Thyroid gland (tissue), 4 donors: ENCODE measurements at regions of chr3 and their contacts with region 1.

Region 1: DNA sequence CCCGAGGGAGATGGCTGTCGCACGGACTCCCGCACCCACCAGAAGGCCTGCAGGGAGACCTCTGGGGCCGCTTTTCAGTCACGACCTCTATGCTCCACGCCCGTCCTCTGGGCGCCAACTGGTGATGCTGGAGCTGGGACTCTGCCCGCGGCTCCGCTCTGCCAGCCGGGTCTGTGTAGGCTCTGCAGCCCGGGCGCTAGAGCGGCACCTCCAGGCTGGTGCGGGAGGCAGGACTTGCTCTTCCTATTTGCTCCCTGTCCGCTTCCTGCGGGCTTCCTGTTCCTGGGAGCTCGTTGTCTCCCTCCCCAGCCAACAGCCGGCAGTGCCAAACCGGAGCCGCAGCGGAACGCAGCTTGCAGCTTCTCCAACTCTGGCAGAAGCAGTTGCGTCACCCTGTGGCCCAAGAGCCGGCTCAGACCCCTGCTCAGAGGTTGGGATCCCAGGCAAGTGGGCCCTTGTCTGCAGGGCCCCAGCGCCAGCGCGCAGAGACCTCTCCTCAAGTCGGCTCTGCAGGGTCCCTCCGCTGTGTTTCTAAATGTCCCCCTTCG is 285.9 kb downstream of the XXYLT1 start:
- DNase-seq: peak; percentile 75 to 83
- H3K4me3 ChIP-seq: peak overlapping the region in 1 of 3 donors; percentile 15
- H3K27ac ChIP-seq: no peak overlapping the region
- H3K4me1 ChIP-seq: peaks cover 0 to 12% of the 10 kb centered on the region in 2 donors
- H3K27me3 ChIP-seq: no peaks in the 10 kb centered on the region
- CTCF ChIP-seq: peak in 4 of 6 experiments; percentile 14 to 54 (median 38)
- POLR2A ChIP-seq: no peak

Region 2: DNA sequence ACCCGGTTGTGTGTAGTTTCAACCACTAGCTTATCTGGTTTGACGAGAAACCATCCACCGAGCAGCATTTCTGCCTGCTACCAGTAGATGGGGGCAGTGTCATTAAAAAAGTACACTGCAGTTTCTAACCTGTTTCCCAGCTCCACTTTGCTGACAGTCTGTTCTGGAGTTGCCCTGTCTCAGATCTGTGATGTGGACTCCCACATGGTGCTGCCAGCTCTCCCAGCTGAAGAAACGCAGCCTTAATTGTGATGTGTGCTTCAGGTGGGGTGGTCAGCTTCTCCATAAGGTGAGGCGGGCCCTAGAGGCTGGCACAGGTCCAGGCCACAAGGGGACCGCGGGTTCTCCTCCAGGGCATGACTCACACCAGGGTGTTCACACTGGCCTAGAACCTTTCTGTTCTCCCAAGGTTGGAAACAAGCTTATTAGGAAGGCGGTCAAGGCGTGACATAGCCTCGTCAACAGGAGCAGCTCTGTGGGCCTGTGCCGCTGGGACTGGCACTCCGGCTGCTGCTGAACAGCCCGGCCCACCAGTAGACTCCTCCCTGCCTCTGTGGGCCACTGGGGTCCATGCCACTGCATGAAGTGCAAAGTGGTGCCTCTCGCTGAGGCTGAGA is 302.3 kb before region 1 on chr3:
- intact Hi-C with region 1: loop called (anchors 10 kb)
- DNase-seq: peak; percentile 81 to 84
- H3K4me3 ChIP-seq: no peak overlapping the region
- H3K27ac ChIP-seq: no peak overlapping the region
- H3K4me1 ChIP-seq: peaks cover 14 to 26% of the 10 kb centered on the region in 2 donors
- H3K27me3 ChIP-seq: no peaks in the 10 kb centered on the region
- CTCF ChIP-seq: peak; percentile 75 to 99 (median 87)
- POLR2A ChIP-seq: no peak